ENCODE measurements at regions of chr1 and their contacts with region 1.

Region 1: DNA sequence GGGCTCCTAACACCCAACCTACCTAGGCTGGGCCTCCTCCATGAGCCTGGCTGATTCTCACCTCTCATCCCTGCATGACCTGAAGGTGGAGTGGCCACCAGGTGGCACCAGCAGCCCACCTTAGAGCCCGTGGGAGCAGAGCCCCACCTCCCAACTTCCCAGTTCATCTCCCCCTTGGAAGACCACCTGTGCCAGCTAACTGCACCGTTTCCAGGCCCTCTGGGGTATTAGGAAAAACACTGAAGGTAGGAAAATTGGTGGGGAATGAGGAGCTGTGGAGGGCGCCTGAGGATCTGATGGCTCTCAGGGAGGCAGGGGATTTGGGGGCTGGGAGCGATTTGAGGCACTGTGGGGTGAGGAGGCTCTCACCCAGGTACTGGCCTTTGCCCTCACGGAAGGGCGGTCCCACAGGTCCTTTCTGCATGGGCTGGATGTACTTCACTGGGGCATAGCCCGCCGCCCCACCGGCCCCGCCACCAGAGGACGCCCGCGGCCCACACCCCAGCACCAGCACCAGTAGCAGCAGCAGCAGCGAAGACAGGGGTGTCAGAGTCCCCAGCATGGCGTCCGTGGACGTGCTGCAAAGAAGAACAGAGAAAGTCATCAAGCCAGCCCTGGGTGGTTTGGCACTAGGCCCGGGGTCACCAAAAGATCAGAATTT is 11.1 kb downstream of the ADPRS start:
- DNase-seq: peak; percentile 61 to 84 (median 71)
- ATAC-seq: peak; percentile 89
- H3K4me3 ChIP-seq: no peak overlapping the region
- H3K4me3 Mint-ChIP-seq: no peak overlapping the region
- H3K27ac ChIP-seq: no peak overlapping the region
- H3K27ac Mint-ChIP-seq: no peak overlapping the region
- H3K4me1 ChIP-seq: peaks cover 12% of the 10 kb centered on the region
- H3K4me1 Mint-ChIP-seq: no peaks in the 10 kb centered on the region
- H3K27me3 ChIP-seq: no peaks in the 10 kb centered on the region
- H3K27me3 Mint-ChIP-seq: no peaks in the 10 kb centered on the region
- CTCF ChIP-seq: peak; percentile 91

Region 2: GRCh38 chr1:36134505-36135329 is 34.9 kb after region 1 on chr1:
- CTCF ChIA-PET with region 1: interaction called, 8 read pairs
- POLR2A ChIA-PET with region 1: interaction called, 6 read pairs
- intact Hi-C with region 1: loop called (anchors 1 to 2 kb)
- DNase-seq: peak in 4 of 14 experiments; percentile 24 to 63 (median 60)
- ATAC-seq: peak; percentile 21
- H3K4me3 ChIP-seq: no peak overlapping the region
- H3K4me3 Mint-ChIP-seq: no peak overlapping the region
- H3K27ac ChIP-seq: no peak overlapping the region
- H3K27ac Mint-ChIP-seq: peak overlapping the region; percentile 21
- H3K4me1 ChIP-seq: peaks cover 6% of the 10 kb centered on the region
- H3K4me1 Mint-ChIP-seq: peaks cover 10% of the 10 kb centered on the region
- H3K27me3 ChIP-seq: no peaks in the 10 kb centered on the region
- H3K27me3 Mint-ChIP-seq: no peaks in the 10 kb centered on the region
- CTCF ChIP-seq: peak; percentile 61

Region 3: GRCh38 chr1:36285448-36286101 is 185.8 kb after region 1 on chr1:
- CTCF ChIA-PET with region 1: interaction called, 6 read pairs
- POLR2A ChIA-PET with region 1: interaction called, 5 read pairs
- intact Hi-C with region 1: loop called (anchors 1 kb)
- DNase-seq: peak; percentile 22 to 92 (median 50)
- ATAC-seq: peak; percentile 99
- H3K4me3 ChIP-seq: no peak overlapping the region
- H3K4me3 Mint-ChIP-seq: no peak overlapping the region
- H3K27ac ChIP-seq: no peak overlapping the region
- H3K27ac Mint-ChIP-seq: peak overlapping the region; percentile 34
- H3K4me1 ChIP-seq: no peaks in the 10 kb centered on the region
- H3K4me1 Mint-ChIP-seq: peaks cover 25% of the 10 kb centered on the region
- H3K27me3 ChIP-seq: no peaks in the 10 kb centered on the region
- H3K27me3 Mint-ChIP-seq: no peaks in the 10 kb centered on the region
- CTCF ChIP-seq: peak; percentile 83

Measured in CD4-positive, alpha-beta T cell (primary cell).